ENCODE measurements at regions of chr3 and their contacts with region 1.

Region 1: DNA sequence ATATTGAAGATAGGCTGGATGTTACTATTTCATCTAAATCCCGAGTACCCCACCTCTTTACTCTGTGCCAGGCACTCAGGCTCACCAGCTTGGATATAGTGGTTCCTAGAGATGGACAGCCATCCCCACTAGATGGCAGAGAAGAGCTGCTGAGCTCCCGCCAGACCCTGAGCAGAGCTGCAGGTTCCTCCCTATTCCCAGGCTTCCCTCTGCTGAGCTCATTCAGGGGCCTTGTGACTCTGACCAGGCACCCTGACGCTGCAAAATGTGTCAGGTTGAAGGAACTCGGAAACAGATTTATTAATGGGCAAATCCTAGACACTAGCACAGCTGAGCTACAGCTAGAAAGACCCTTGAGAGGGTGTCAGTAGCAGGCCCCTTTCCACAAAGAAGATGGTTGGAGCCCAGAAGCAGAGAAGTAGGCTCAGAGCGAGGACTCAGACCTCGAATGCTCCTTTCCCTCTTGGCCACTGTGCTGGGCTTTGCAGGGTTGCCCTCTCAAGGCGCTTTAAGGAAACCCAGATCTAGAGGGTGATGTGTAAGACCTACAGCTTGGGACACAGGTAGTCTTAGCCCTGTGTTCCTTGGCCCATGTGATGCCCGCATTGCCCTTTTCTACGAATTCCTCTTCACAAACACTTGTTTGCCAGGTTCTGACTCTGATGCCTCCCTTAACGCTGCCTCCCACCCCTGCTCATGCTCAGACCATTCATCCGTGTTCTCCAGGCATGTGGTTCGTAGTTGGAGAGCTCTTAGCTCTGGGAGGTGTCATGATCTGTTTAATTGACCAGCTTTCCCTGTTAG is 38.0 kb upstream of the RHO start:
- DNase-seq: peak; percentile 83
- ATAC-seq: peak; percentile 90

Region 2: GRCh38 chr3:129608087-129608935 is 117.9 kb after region 1 on chr3:
- intact Hi-C with region 1: loop called in 1 of 2 experiments (anchors 2 kb)
- DNase-seq: no peak
- ATAC-seq: no peak

Region 3: GRCh38 chr3:129627429-129628168 is 137.2 kb after region 1 on chr3:
- intact Hi-C with region 1: loop called in 1 of 2 experiments (anchors 2 kb)
- DNase-seq: peak; percentile 71
- ATAC-seq: peak; percentile 44 to 50

Measured in left cardiac atrium (tissue), 4 donors.